ENCODE measurements at regions of chr10 and their contacts with region 1.

Region 1: DNA sequence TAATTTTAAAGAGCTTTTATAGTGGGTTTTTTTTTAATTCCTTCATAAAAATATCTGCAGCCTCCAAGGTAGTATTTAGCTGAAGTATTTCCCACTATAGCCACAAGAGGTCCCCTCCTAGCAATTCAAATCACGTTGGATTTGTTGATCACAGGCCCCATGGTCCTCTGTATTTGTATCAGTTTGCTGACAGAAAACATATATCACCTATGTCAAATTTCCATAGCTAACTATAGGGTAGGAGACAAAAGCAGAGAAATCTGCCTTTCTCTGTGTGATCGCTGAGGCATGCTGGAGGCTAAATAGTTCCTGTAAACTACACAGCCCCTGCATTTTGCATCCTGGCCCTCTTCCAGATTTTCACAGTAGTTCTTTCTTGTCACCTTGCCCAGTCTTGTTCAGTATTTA is 1.7 kb upstream of the CTNNA3 start:
- DNase-seq: no peak
- ATAC-seq: peak; percentile 64 to 74
- H3K4me3 ChIP-seq: no peak overlapping the region
- H3K27ac ChIP-seq: no peak overlapping the region
- H3K4me1 ChIP-seq: no peaks in the 10 kb centered on the region
- H3K27me3 ChIP-seq: no peaks in the 10 kb centered on the region

Region 2: DNA sequence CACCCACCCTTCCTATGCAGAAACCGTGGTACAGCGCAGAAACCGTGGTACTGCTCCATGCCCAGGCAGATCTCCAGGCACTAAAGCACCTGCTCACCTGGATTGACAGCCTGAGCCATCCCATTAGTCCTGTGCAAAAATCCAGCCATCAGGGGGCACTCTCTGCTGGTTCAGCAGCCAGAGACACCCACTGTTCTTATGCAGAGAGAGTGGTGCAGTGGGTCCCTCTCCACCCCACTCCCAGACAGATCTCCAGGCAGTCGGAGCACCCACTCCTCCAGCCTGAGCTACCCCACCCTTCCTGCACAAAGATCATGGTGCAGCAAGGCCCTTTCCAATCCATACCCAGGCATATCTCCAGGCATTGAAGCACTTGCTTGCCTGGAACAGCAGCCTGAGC is 221.5 kb before region 1 on chr10:
- intact Hi-C with region 1: no loop called
- DNase-seq: no peak
- ATAC-seq: no peak
- H3K4me3 ChIP-seq: no peak overlapping the region
- H3K27ac ChIP-seq: no peak overlapping the region
- H3K4me1 ChIP-seq: no peaks in the 10 kb centered on the region
- H3K27me3 ChIP-seq: no peaks in the 10 kb centered on the region

Region 3: DNA sequence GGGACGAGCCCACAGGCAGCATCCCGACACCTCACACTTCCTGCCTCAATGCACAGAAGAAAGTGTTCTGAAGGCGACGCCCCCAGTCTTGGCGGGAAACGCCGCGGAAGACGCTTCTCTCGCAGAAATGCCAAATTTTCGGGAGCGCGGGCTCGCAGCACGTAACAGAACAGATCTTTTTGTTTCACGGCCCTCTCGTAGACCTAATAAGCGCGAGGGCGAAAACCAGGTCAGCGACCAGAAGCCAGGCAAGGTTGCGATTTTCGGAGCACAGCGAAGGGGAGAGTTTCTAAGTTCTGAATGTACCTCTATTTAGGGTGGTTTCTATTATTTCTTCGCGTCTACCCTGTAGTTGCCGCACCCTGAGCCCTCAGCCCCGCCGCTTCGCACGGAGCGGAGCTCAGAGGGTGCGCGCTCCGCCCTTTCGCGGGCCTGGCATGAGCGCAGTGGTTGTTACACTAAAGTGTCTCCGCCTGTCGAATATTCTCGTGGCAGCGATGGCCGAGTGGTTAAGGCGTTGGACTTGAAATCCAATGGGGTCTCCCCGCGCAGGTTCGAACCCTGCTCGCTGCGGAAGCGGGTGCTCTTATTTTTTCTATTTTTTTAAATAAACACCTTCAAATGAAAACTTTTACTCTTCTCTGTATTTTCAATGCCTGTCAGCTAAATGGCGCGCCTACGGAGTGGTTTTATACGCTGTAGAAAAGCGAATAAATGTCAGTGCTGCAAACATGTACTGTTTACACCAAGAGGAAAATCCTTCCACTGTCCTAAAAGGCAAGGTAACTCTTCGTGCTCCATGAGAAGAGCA is 66.5 kb after region 1 on chr10:
- intact Hi-C with region 1: loop called in 1 of 4 experiments (anchors 5 kb)
- DNase-seq: peak; percentile 90 to 96 (median 95)
- ATAC-seq: peak; percentile 97
- H3K4me3 ChIP-seq: peak overlapping the region; percentile 98
- H3K27ac ChIP-seq: peak overlapping the region; percentile 91
- H3K4me1 ChIP-seq: no peaks in the 10 kb centered on the region
- H3K27me3 ChIP-seq: no peaks in the 10 kb centered on the region

Region 4: GRCh38 chr10:67779465-67780203 is 81.9 kb after region 1 on chr10:
- intact Hi-C with region 1: loop called in 2 of 4 experiments (anchors 10 kb)
- DNase-seq: peak in 1 of 3 donors; percentile 34
- ATAC-seq: peak; percentile 83 to 84
- H3K4me3 ChIP-seq: no peak overlapping the region
- H3K27ac ChIP-seq: no peak overlapping the region
- H3K4me1 ChIP-seq: no peaks in the 10 kb centered on the region
- H3K27me3 ChIP-seq: no peaks in the 10 kb centered on the region

Measured in right cardiac atrium (tissue), 5 donors.